Body of pancreas (tissue), 4 donors: ENCODE measurements at regions of chr19 and their contacts with region 1.

Region 1: DNA sequence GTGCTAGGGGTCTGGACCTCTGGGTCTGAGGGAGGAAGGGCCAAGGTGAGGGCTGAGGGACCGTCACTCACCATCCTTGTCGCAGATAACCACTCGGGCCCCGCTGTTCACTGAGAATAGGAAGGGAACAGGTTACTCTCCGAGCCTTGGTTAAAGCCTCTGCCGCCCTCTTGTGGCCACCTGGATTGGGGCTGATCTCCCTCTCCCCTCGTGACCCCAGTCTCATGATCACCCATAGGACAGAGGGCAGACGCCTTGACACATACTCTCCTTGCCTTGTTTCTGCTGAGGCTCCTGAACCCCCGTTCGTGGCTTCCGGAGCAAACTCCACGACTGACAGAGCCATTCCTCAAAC is 580 bp downstream of the HSD17B14 start:
- DNase-seq: peak; percentile 95 to 98 (median 96)
- ATAC-seq: peak; percentile 97
- H3K4me3 ChIP-seq: no peak overlapping the region
- H3K27ac ChIP-seq: peak overlapping the region in 2 of 4 donors; percentile 30 to 47
- H3K4me1 ChIP-seq: peaks cover 22% of the 10 kb centered on the region
- H3K27me3 ChIP-seq: no peaks in the 10 kb centered on the region
- CTCF ChIP-seq: peak; percentile 80 to 98 (median 96)
- POLR2A ChIP-seq: peak in 2 of 3 donors; percentile 6 to 29

Region 2: DNA sequence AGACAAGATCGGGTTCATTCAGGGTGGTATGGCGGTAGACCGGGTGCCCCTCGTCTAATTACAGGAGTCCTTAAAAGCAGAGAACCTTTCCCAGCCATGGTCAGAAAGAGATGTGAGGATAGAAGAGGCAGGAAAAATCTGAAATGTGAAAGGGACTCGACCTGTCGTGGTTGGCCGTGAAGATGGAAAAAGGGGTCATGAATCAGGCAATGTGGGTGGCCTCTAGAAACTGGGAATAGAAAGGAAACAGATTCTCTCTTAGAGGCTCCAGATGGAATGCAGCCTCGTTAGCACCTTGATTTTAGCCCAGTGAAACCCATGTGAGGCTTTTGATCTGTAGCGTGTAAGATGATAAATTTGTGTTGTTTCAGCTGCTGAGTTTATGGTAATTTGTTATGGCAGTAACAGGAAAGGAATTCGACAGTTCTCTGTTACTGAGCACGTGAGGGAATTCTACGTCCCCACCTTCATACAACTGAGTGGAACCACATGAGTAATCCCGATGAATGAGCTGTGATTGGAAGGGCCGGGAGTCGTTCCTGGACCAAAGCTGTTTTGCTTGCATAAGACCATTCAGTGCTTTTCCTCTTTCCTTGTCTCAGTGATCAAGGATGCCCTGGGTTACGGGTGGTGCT is 178.8 kb before region 1 on chr19:
- intact Hi-C with region 1: loop called (anchors 10 kb)
- DNase-seq: peak in 1 of 4 donors; percentile 23
- ATAC-seq: peak; percentile 15
- H3K4me3 ChIP-seq: no peak overlapping the region
- H3K27ac ChIP-seq: no peak overlapping the region
- H3K4me1 ChIP-seq: peaks cover 11% of the 10 kb centered on the region
- H3K27me3 ChIP-seq: no peaks in the 10 kb centered on the region
- CTCF ChIP-seq: no peak
- POLR2A ChIP-seq: no peak

Region 3: GRCh38 chr19:48795055-48795684 is 40.5 kb before region 1 on chr19:
- intact Hi-C with region 1: loop called (anchors 5 kb)
- DNase-seq: peak; percentile 91 to 96 (median 94)
- ATAC-seq: peak; percentile 97
- H3K4me3 ChIP-seq: no peak overlapping the region
- H3K27ac ChIP-seq: peak overlapping the region; percentile 75 to 82 (median 78)
- H3K4me1 ChIP-seq: peaks cover 17% of the 10 kb centered on the region
- H3K27me3 ChIP-seq: no peaks in the 10 kb centered on the region
- CTCF ChIP-seq: peak; percentile 88 to 99 (median 95)
- POLR2A ChIP-seq: peak in 2 of 3 donors; percentile 23 to 39

Region 4: GRCh38 chr19:48918801-48919247 is 83.1 kb after region 1 on chr19:
- intact Hi-C with region 1: no loop called
- DNase-seq: no peak
- ATAC-seq: no peak
- H3K4me3 ChIP-seq: no peak overlapping the region
- H3K27ac ChIP-seq: no peak overlapping the region
- H3K4me1 ChIP-seq: no peaks in the 10 kb centered on the region
- H3K27me3 ChIP-seq: no peaks in the 10 kb centered on the region
- CTCF ChIP-seq: no peak
- POLR2A ChIP-seq: no peak